Heart right ventricle (tissue), 16 donors: ENCODE measurements at regions of chr6 and their contacts with region 1.

Region 1: DNA sequence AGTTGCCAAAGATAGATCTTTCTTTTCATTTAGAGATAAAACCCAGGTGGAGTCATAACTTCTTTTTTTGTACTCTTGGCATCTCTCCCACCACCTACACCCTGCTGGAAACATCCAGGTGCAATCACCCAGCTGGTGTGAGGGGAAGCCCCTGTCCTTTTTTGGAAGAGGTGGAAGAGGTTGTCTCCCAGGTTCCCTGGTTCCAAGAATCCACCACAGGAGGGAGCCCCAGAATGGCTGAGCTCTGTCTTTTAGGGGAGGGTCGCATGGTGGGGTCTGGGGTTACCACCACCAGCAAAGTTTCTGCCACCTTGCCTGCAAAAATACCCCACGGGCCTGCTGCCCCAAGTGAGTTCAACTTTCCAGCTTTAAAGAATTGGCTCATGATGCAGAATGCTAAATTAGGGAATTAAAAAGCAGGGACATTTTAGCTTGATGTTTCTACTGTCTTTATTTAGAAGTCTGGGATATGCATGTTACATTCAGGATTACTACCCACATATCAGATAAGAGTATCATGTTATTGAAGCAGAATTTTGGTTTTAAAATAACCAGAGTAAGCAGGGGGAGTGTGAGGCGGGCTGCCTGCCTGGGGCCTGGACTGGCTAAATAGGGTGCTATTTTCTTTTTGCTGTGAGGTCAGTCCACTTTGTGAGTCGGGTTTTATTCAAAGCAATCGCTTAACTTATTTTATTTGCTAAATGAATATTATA is 11.0 kb downstream of the SMOC2 start:
- DNase-seq: no peak
- ATAC-seq: peak in 4 of 8 donors; percentile 27 to 49 (median 40)
- H3K4me3 ChIP-seq: no peak overlapping the region
- H3K27ac ChIP-seq: peak overlapping the region in 4 of 10 donors; percentile 8 to 39 (median 22)
- H3K4me1 ChIP-seq: peaks cover 0 to 48% (median 10%) of the 10 kb centered on the region in 9 donors
- H3K27me3 ChIP-seq: peaks cover 0 to 47% (median 10%) of the 10 kb centered on the region in 7 donors
- CTCF ChIP-seq: peak in 8 of 9 donors; percentile 23 to 50 (median 32)

Region 2: DNA sequence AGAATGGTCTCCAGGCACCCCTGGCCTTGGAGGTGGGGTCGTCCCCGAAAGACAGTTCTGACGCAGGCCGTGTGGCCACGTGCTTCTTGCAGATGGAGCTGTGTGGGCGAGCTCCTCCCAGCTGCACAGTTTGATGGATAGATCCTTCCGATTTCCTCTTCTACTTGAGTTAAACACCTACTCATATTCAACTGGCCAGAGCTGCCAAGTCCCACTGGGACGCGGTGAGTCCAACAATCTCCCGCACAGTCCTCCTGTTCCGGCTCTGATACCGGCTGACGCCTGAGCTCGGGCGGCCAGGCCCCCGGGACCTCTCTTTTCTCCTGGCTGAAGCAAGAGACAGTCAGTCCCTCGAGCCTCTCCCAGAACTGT is 74.5 kb before region 1 on chr6:
- intact Hi-C with region 1: loop called in 2 of 10 experiments (anchors 2 to 10 kb)
- DNase-seq: peak; percentile 44 to 77
- ATAC-seq: peak; percentile 57 to 92 (median 86)
- H3K4me3 ChIP-seq: peak overlapping the region in 2 of 10 donors; percentile 0 to 13
- H3K27ac ChIP-seq: peak overlapping the region in 6 of 10 donors; percentile 8 to 77 (median 56)
- H3K4me1 ChIP-seq: peaks cover 0 to 8% (median 5%) of the 10 kb centered on the region in 9 donors
- H3K27me3 ChIP-seq: peaks cover 0 to 26% (median 0%) of the 10 kb centered on the region in 7 donors
- CTCF ChIP-seq: no peak

Region 3: GRCh38 chr6:168533414-168533813 is 81.5 kb after region 1 on chr6:
- intact Hi-C with region 1: loop called in 1 of 10 experiments (anchors 10 kb)
- DNase-seq: peak in 1 of 2 donors; percentile 47
- ATAC-seq: peak in 7 of 8 donors; percentile 40 to 80 (median 66)
- H3K4me3 ChIP-seq: no peak overlapping the region
- H3K27ac ChIP-seq: peak overlapping the region in 9 of 10 donors; percentile 5 to 69 (median 44)
- H3K4me1 ChIP-seq: peaks cover 0 to 58% (median 11%) of the 10 kb centered on the region in 9 donors
- H3K27me3 ChIP-seq: no peaks in the 10 kb centered on the region
- CTCF ChIP-seq: no peak

Region 4: DNA sequence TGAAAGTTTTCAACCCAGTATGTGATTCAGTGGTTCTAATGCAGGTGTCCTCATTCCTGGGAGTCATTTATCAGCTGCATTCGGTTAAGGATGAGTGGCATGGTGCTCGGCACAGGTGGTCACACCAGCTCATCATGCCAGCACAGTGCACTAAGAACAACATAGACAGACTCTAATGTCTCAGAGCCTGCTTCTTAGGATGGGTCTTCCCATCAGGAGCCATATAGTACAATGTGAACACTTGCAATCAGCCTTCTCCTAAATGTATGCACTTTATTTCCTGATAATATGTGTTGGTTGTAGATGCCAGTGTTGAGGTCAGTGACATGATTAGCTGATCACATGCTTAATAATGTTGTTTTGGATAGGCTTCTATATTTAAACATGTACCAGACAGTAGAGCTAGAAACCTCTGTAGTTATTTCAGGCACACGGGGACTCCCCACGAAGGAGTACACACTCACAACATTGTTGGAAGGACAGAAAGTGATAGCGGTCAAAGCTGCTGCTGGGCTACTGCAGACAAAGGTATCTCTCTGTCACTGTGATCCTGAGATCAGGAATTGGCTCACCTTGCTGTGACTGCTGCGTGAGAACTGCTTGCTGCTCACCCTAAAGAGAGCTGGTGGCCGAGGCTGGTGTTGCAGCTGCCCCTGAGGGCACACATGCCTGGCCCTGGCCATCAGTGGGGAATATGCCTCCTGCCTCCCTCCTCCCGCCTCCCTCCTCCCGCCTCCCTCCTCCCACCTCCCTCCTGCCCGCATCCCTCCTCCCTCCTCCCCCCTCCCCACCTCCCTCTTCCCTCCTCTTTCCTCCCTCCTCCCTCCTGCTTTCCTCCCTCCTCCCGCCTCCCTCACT is 184.4 kb after region 1 on chr6:
- intact Hi-C with region 1: loop called in 1 of 10 experiments (anchors 10 kb)
- DNase-seq: no peak
- ATAC-seq: peak; percentile 35 to 92 (median 80)
- H3K4me3 ChIP-seq: no peak overlapping the region
- H3K27ac ChIP-seq: peak overlapping the region in 4 of 10 donors; percentile 16 to 56 (median 45)
- H3K4me1 ChIP-seq: peaks cover 0 to 31% (median 8%) of the 10 kb centered on the region in 9 donors
- H3K27me3 ChIP-seq: no peaks in the 10 kb centered on the region
- CTCF ChIP-seq: no peak